Caco-2 (cell line): ENCODE measurements at regions of chr12 and their contacts with region 1.

Region 1: DNA sequence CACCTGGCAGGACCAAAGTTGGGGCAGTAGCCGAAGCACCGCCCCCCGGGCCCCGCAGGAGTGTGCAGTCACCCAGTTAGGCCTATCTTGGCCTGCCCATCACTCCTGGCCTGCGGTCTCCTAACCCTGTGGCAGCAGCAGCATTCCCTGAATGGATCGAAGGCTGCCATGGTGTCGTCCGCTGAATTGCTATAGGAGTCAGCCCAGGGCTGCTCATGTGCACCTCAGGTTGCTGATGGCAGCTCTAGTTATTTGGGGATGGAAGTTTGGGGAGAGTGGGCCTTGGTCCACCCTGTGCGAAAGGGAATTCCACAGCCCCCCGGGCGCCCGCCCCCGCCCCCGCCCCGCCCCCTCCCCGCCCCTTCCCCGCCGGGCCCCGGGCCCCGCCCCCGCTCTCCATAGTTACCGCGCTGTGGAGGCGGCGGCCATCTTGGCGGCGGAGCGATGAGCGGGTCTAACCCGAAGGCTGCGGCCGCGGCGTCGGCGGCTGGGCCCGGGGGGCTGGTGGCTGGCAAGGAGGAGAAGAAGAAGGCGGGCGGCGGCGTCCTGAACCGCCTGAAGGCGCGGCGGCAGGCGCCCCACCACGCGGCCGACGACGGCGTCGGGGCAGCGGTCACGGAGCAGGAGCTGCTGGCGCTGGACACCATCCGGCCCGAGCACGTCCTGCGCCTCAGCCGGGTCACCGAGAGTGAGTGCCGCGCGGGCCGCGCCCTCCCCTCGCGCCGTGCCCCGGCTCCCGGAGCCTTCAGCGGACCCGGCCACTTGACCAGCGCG is at the start of gene UNC119B:
- DNase-seq: peak; percentile 61 to 82
- H3K4me3 ChIP-seq: peak within 1 kb of the TSS; percentile 70
- H3K4me3 Mint-ChIP-seq: peak within 1 kb of the TSS; percentile 80
- H3K27ac Mint-ChIP-seq: peak within 1 kb of the TSS; percentile 45
- H3K4me1 ChIP-seq: peaks cover 9% of the 10 kb centered on the region
- H3K4me1 Mint-ChIP-seq: peaks cover 12% of the 10 kb centered on the region
- H3K27me3 ChIP-seq: no peaks in the 10 kb centered on the region
- H3K27me3 Mint-ChIP-seq: no peaks in the 10 kb centered on the region
- CTCF ChIP-seq: no peak
- total RNA-seq, gene UNC119B: 39.1 and 44.4 TPM in 2 replicates

Region 2: GRCh38 chr12:120181991-120182631 is 528.1 kb before region 1 on chr12:
- CTCF ChIA-PET with region 1: no interaction called
- POLR2A ChIA-PET with region 1: interaction called, 19 read pairs
- intact Hi-C with region 1: no loop called
- DNase-seq: peak; percentile 75 to 76
- H3K4me3 ChIP-seq: no peak overlapping the region
- H3K4me3 Mint-ChIP-seq: no peak overlapping the region
- H3K27ac Mint-ChIP-seq: peak overlapping the region; percentile 59
- H3K4me1 ChIP-seq: peaks cover 12% of the 10 kb centered on the region
- H3K4me1 Mint-ChIP-seq: peaks cover 13% of the 10 kb centered on the region
- H3K27me3 ChIP-seq: no peaks in the 10 kb centered on the region
- H3K27me3 Mint-ChIP-seq: no peaks in the 10 kb centered on the region
- CTCF ChIP-seq: no peak

Region 3: GRCh38 chr12:120686690-120687577 is 23.3 kb before region 1 on chr12 and contains the start of gene MLEC:
- CTCF ChIA-PET with region 1: no interaction called
- POLR2A ChIA-PET with region 1: interaction called, 3 read pairs
- intact Hi-C with region 1: loop called (anchors 1 kb)
- DNase-seq: peak; percentile 98 to 99
- H3K4me3 ChIP-seq: peak within 1 kb of the TSS; percentile 90
- H3K4me3 Mint-ChIP-seq: peak within 1 kb of the TSS; percentile 79
- H3K27ac Mint-ChIP-seq: peak within 1 kb of the TSS; percentile 85
- H3K4me1 ChIP-seq: peaks cover 31% of the 10 kb centered on the region
- H3K4me1 Mint-ChIP-seq: peaks cover 17% of the 10 kb centered on the region
- H3K27me3 ChIP-seq: no peaks in the 10 kb centered on the region
- H3K27me3 Mint-ChIP-seq: no peaks in the 10 kb centered on the region
- CTCF ChIP-seq: peak in 1 of 2 experiments; percentile 11
- total RNA-seq, gene MLEC: 143 and 150 TPM in 2 replicates